ENCODE measurements at regions of chr16 and their contacts with region 1.

Region 1: DNA sequence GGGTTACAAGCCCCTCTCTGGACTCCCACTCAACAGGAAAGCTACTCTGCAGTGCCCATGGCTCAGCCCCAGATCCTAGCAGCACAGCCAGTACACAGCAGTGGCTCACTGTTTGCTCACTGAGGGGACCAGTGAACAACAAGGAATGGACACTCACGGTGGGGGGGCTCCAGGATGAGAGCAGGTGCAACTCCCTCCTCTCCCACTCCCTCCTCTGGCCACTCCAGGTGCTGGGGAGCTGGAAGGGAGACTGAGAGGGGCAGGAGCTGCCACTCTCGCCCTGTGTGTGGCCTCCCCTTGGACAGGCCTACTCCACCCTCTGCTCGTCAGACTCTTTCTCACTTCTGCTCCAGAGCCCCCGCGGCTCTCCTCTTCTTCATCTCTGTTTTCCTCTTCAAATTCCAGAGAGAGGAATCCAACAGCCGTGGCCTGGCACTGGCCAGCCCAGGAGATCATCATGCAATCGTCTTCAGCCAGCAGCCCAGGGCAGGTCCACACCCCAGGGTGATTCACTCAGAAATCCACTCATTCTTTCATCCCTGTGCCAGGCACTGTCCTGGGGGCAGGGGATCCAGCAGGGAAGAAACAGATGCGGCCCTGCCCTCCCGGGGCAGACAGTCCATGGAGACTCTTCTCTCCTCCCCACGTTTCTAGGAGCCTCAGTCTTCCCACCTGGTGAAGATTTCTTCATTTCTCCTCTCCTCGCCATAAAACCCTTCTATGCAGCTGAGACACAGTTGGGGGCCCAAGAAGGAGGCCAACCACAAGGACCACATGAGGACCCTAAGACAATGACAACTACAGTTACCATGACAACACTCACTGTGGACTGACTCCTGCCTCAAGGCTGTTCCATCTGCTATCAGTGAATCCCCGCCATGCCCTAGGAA is 30.7 kb downstream of the CFAP20 start:
- DNase-seq: no peak
- ATAC-seq: no peak
- H3K4me3 Mint-ChIP-seq: no peak overlapping the region
- H3K27ac Mint-ChIP-seq: no peak overlapping the region
- H3K4me1 Mint-ChIP-seq: peaks cover 19% of the 10 kb centered on the region
- H3K27me3 Mint-ChIP-seq: peaks cover 2% of the 10 kb centered on the region
- CTCF ChIP-seq: no peak

Region 2: DNA sequence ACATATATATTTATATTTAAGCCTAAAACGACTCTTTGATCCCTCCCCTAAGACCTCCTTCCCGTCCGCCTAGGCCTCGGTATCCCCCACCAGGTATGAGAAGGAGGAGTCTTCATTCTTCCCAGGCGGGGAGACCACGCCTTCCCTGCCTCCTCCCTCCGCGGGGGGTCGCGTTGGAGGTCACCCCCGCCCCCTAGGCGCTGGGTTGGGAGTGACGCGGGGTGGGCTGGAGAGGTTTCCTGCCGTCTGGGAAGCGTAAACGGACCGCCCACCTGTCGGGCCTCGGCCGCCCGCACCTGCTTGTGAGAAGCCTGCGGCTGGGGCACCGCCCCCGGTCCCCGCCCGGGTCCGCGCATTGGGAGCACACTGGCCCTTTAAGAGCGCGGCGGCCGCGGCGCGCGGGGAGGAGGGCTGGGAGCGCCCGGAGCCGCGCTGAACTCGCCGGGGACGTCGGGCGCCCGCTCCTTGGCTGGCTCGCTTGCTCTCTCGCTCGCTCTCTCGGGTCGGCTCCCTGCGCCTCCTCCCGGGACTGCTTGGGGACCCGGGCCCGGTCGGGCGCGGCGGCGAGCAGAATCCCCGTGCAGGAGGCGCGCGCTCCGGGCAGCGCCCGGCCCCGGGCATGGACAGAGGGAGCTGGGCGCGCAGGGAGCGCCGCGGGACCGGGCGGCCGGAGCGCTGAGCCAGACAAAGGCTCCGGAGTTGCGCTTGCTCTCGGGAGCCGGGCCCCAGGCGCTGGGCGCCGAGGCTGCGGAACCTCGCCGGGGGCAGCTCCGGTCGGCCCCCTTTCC is 72.9 kb before region 1 on chr16 and contains the start of gene MMP15:
- CTCF ChIA-PET with region 1: interaction called, 28 read pairs
- POLR2A ChIA-PET with region 1: interaction called, 4 read pairs
- DNase-seq: peak; percentile 98
- ATAC-seq: peak; percentile 61
- H3K4me3 Mint-ChIP-seq: peak within 1 kb of the TSS; percentile 82
- H3K27ac Mint-ChIP-seq: peak within 1 kb of the TSS; percentile 95
- H3K4me1 Mint-ChIP-seq: peaks cover 54% of the 10 kb centered on the region
- H3K27me3 Mint-ChIP-seq: peaks cover 10% of the 10 kb centered on the region
- CTCF ChIP-seq: no peak
- total RNA-seq, gene MMP15: 55.5 to 60.7 TPM (median 58.2 TPM) in 3 replicates

Region 3: GRCh38 chr16:58047557-58048348 is 50.7 kb before region 1 on chr16:
- CTCF ChIA-PET with region 1: interaction called, 11 read pairs
- POLR2A ChIA-PET with region 1: no interaction called
- DNase-seq: no peak
- ATAC-seq: peak; percentile 64
- H3K4me3 Mint-ChIP-seq: no peak overlapping the region
- H3K27ac Mint-ChIP-seq: no peak overlapping the region
- H3K4me1 Mint-ChIP-seq: peaks cover 20% of the 10 kb centered on the region
- H3K27me3 Mint-ChIP-seq: no peaks in the 10 kb centered on the region
- CTCF ChIP-seq: no peak

Region 4: DNA sequence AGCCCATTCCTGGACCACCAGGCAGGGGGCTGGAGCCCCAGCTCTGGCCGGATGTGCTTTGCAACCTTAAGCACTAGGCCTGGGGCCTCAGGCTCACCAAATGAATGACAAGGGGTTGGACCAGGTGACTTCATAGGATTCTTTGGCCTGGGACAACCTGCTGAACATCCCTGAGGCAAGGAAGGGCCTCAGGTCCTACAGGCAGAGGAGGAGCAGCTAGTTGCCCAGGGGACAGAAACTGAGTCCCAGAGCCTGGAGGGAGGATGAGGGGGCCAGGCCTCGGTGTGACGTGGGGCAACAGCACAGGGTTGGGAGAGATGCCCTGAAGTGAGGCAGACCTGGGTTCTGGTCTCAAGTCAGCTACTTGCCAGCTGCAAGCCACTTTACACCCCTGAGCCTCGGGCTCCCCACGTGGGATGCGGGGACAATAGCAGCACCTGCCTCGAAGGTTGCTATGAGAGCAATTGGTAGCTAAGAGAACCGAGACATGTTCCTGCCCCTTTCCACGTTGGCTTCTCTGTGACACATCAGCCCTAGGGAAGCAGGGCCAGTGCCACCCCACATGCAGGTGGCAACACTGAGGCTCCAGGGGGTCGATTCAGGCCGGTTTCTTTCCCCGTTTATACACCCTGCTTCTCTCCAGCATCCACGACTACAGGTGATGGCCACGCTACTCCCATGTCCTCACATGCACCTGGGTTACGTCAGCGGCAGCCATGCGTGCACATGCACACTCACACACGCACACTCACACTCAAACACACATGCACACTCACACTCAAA is 11.8 kb before region 1 on chr16:
- CTCF ChIA-PET with region 1: interaction called, 24 read pairs
- POLR2A ChIA-PET with region 1: no interaction called
- DNase-seq: no peak
- ATAC-seq: peak; percentile 38
- H3K4me3 Mint-ChIP-seq: no peak overlapping the region
- H3K27ac Mint-ChIP-seq: no peak overlapping the region
- H3K4me1 Mint-ChIP-seq: peaks cover 19% of the 10 kb centered on the region
- H3K27me3 Mint-ChIP-seq: peaks cover 6% of the 10 kb centered on the region
- CTCF ChIP-seq: no peak

Region 5: GRCh38 chr16:58110571-58111301 is 12.3 kb after region 1 on chr16:
- CTCF ChIA-PET with region 1: interaction called, 92 read pairs
- POLR2A ChIA-PET with region 1: no interaction called
- DNase-seq: no peak
- ATAC-seq: peak; percentile 63
- H3K4me3 Mint-ChIP-seq: no peak overlapping the region
- H3K27ac Mint-ChIP-seq: peak overlapping the region; percentile 58; the same call in 1 of the 2 replicates
- H3K4me1 Mint-ChIP-seq: peaks cover 38% of the 10 kb centered on the region
- H3K27me3 Mint-ChIP-seq: no peaks in the 10 kb centered on the region
- CTCF ChIP-seq: no peak

Region 6: GRCh38 chr16:58129097-58129936 is 30.9 kb after region 1 on chr16 and contains the start of gene CFAP20:
- CTCF ChIA-PET with region 1: interaction called, 38 read pairs
- POLR2A ChIA-PET with region 1: no interaction called
- DNase-seq: peak; percentile 97
- ATAC-seq: peak; percentile 94
- H3K4me3 Mint-ChIP-seq: peak within 1 kb of the TSS; percentile 87
- H3K27ac Mint-ChIP-seq: peak within 1 kb of the TSS; percentile 96
- H3K4me1 Mint-ChIP-seq: peaks cover 29% of the 10 kb centered on the region
- H3K27me3 Mint-ChIP-seq: no peaks in the 10 kb centered on the region; the same call in 1 of the 2 replicates
- CTCF ChIP-seq: no peak
- total RNA-seq, gene CFAP20: 41.9 to 46.9 TPM (median 42.4 TPM) in 3 replicates